Lower leg skin (tissue), 4 donors: ENCODE measurements at regions of chr3 and their contacts with region 1.

Region 1: GRCh38 chr3:134373994-134374790 is at the start of gene AMOTL2:
- DNase-seq: peak; percentile 82 to 97
- H3K4me3 ChIP-seq: peak within 1 kb of the TSS; percentile 79
- CTCF ChIP-seq: no peak
- POLR2A ChIP-seq: peak in 1 of 2 donors; percentile 73
- total RNA-seq, gene AMOTL2: 97.1 to 151 (median 120) TPM

Region 2: DNA sequence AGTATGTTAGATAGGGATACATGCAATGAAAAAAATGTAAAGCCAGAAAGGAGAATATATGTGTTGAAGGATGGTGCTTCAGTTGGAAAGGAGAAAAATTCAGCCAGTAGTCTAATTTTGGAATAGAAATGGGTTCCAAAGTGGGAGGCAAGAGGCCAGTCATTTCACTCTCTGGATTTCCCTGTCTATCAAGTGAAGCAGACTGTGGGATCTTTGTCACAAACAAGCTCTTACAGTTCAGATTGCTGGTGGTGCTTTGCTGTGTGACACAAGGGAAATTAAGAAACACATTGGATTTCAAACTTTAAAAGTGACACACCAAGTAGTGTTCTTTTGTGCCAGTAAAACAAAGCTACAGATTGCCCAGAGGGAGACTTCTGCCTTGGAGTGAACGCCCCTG is 1056.3 kb before region 1 on chr3:
- intact Hi-C with region 1: no loop called
- DNase-seq: no peak
- H3K4me3 ChIP-seq: no peak overlapping the region
- CTCF ChIP-seq: no peak
- POLR2A ChIP-seq: no peak

Region 3: DNA sequence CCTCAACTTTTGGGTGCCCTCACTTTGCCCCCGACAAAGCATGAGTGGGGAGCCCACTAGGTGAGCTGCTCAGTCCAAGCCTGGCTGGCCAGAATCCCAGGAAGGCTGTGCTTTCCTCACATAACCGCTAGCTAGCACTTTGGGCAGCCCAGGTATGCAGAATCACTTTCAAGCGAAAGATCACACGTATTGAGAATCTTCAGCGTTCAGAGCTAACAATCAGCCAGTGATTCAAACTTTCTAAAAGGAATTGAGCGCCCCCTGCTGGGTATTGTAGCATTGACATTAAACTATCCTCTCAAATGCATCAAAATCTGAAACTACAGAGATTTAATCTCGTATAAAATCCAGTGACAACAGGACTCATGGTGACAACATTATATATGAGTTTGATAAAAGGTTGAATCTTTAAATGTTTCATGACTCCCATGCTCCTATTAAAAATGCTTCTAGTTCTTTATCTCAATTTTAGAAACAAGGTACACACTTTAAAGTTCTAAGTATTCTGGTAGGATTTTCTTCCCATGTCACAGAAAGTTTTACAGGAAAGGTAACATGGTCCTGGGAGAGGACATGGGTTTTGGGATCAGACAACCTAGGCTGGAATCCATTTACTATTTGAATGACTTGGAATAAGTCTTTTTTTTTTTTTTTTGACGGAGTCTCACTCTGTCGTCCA is 99.8 kb after region 1 on chr3:
- intact Hi-C with region 1: loop called (anchors 10 kb)
- DNase-seq: peak; percentile 88 to 95
- H3K4me3 ChIP-seq: no peak overlapping the region
- CTCF ChIP-seq: no peak
- POLR2A ChIP-seq: no peak

Region 4: DNA sequence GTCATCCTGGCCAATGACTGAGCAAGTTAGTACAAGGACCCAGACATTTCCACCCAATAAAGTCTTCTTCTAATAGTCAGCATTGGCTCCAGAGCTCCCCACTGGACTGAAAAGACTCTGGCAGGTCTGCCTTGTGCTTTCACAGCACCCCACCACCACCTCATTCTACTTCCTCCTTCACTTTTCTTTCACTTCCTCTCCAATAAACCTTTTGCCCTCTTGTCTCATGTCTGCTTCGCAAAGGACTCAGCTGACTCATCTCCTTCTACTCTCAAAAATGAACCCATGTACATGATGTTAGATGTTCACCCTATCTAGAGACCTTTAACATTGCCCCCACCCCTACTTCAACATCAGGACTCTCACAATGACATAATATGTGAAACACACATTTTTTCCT is 1410.4 kb after region 1 on chr3:
- intact Hi-C with region 1: no loop called
- DNase-seq: no peak
- H3K4me3 ChIP-seq: no peak overlapping the region
- CTCF ChIP-seq: no peak
- POLR2A ChIP-seq: no peak